ENCODE measurements at regions of chr6 and their contacts with region 1.

Region 1: GRCh38 chr6:106629103-106629858 is at the starts of genes QRSL1 and RTN4IP1:
- DNase-seq: peak; percentile 96
- ATAC-seq: peak; percentile 83
- H3K4me3 ChIP-seq: peak within 1 kb of the TSS; percentile 67 to 98 (median 94)
- H3K4me3 Mint-ChIP-seq: peak within 1 kb of the TSS; percentile 98
- H3K27ac ChIP-seq: peak within 1 kb of the TSS; percentile 87 to 97
- H3K27ac Mint-ChIP-seq: peak within 1 kb of the TSS; percentile 98
- H3K4me1 ChIP-seq: peaks cover 43 to 50% of the 10 kb centered on the region in 2 donors
- H3K4me1 Mint-ChIP-seq: peaks cover 64% of the 10 kb centered on the region
- H3K27me3 ChIP-seq: no peaks in the 10 kb centered on the region
- H3K27me3 Mint-ChIP-seq: no peaks in the 10 kb centered on the region
- CTCF ChIP-seq: no peak
- total RNA-seq, gene QRSL1: 38.5 and 42.1 TPM in 2 replicates
- total RNA-seq, gene RTN4IP1: 12.1 and 13.3 TPM in 2 replicates

Region 2: DNA sequence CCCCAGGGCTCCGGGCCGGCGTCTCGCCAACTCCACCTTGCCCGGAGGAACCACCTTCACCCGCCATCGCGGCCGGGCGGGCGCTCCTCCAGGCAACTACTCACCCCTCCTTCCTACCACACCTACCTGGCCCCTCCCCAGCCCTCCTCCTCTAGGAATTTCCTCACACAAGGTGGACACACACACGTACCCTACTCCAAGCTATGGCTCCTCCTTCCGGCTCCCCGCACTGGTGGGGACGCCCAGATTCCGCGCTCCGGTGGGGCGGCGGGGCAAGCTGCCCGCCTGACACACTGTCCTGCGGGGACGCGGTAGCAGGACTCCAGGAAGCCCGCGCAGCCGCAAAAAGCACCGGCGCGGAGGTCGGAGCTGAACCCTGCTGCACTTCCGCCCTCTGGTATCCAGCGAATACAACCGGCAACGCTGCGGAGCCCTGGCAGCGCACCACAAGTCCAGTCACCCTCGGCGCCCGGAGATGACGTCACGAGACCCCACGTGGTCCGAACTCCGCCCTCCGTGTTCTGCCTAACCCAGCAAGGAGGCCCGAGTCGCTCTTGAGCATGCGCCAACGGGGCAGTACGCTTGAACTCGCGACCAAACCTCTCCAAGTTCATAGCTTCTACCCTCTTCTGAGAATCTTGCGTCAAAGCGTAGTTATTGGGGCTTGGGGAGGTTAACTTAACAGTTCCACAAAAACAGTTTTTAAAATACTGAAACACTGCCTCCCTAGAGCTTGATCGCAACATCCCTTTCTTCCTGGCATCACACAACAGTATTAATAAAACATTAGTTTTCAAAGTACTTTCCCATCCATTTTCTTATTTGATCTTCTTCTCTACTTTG is 303.7 kb before region 1 on chr6 and contains the start of gene ATG5:
- CTCF ChIA-PET with region 1: no interaction called
- POLR2A ChIA-PET with region 1: no interaction called
- intact Hi-C with region 1: loop called (anchors 1 kb)
- DNase-seq: peak; percentile 99
- ATAC-seq: peak; percentile 92
- H3K4me3 ChIP-seq: peak within 1 kb of the TSS; percentile 87 to 99 (median 94)
- H3K4me3 Mint-ChIP-seq: peak within 1 kb of the TSS; percentile 100
- H3K27ac ChIP-seq: peak within 1 kb of the TSS; percentile 89 to 91
- H3K27ac Mint-ChIP-seq: peak within 1 kb of the TSS; percentile 98
- H3K4me1 ChIP-seq: peaks cover 16 to 20% of the 10 kb centered on the region in 2 donors
- H3K4me1 Mint-ChIP-seq: peaks cover 44% of the 10 kb centered on the region
- H3K27me3 ChIP-seq: peaks cover 0 to 6% (median 4%) of the 10 kb centered on the region in 4 experiments
- H3K27me3 Mint-ChIP-seq: peaks cover 27% of the 10 kb centered on the region
- CTCF ChIP-seq: no peak
- total RNA-seq, gene ATG5: 26.3 and 34.0 TPM in 2 replicates

Region 3: DNA sequence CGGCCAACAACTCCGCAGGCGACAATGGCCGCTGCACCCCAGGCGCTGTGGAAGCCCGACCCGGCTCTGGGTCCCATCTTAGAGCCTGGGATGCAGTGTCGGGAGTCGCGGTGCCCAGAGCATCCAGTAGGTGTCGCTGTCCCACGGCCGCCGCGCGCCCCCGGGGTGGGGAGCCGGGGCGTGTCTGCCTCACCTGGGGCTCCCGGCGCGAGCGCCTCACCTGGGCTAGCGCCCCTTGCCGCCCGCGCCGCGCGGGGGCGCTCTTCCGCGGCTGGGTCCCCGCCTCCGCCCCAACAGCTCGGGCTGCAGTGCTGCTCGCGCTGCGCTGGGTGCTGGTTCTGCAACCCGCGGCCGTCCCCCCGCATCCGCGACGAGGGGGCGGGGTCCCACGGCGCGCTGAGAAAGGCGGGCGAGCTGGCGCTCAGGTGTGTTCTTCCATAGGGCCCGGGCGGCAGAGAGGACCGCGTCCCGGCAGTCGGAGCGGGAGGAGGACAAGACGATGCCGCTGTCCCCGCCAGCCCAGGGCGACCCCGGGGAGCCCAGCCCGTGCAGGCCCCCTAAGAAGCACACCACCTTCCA is 268.8 kb before region 1 on chr6 and contains the start of gene CRYBG1:
- CTCF ChIA-PET with region 1: no interaction called
- POLR2A ChIA-PET with region 1: no interaction called
- intact Hi-C with region 1: no loop called
- DNase-seq: peak; percentile 78
- ATAC-seq: peak; percentile 83
- H3K4me3 ChIP-seq: peak within 1 kb of the TSS in 4 of 5 experiments; percentile 41 to 60 (median 50)
- H3K4me3 Mint-ChIP-seq: peak within 1 kb of the TSS; percentile 90
- H3K27ac ChIP-seq: no peak within 1 kb of the TSS
- H3K27ac Mint-ChIP-seq: peak within 1 kb of the TSS; percentile 53
- H3K4me1 ChIP-seq: peaks cover 11 to 16% of the 10 kb centered on the region in 2 donors
- H3K4me1 Mint-ChIP-seq: peaks cover 11% of the 10 kb centered on the region
- H3K27me3 ChIP-seq: peaks cover 0 to 38% (median 28%) of the 10 kb centered on the region in 4 experiments
- H3K27me3 Mint-ChIP-seq: peaks cover 47% of the 10 kb centered on the region
- CTCF ChIP-seq: peak; percentile 90
- total RNA-seq, gene CRYBG1: 47.0 and 47.2 TPM in 2 replicates

Region 4: GRCh38 chr6:106460481-106460880 is 168.8 kb before region 1 on chr6:
- CTCF ChIA-PET with region 1: no interaction called
- POLR2A ChIA-PET with region 1: interaction called, 11 read pairs
- intact Hi-C with region 1: no loop called
- DNase-seq: no peak
- ATAC-seq: no peak
- H3K4me3 ChIP-seq: no peak overlapping the region
- H3K4me3 Mint-ChIP-seq: no peak overlapping the region
- H3K27ac ChIP-seq: no peak overlapping the region
- H3K27ac Mint-ChIP-seq: no peak overlapping the region
- H3K4me1 ChIP-seq: no peaks in the 10 kb centered on the region
- H3K4me1 Mint-ChIP-seq: no peaks in the 10 kb centered on the region
- H3K27me3 ChIP-seq: no peaks in the 10 kb centered on the region
- H3K27me3 Mint-ChIP-seq: no peaks in the 10 kb centered on the region
- CTCF ChIP-seq: no peak

Region 5: DNA sequence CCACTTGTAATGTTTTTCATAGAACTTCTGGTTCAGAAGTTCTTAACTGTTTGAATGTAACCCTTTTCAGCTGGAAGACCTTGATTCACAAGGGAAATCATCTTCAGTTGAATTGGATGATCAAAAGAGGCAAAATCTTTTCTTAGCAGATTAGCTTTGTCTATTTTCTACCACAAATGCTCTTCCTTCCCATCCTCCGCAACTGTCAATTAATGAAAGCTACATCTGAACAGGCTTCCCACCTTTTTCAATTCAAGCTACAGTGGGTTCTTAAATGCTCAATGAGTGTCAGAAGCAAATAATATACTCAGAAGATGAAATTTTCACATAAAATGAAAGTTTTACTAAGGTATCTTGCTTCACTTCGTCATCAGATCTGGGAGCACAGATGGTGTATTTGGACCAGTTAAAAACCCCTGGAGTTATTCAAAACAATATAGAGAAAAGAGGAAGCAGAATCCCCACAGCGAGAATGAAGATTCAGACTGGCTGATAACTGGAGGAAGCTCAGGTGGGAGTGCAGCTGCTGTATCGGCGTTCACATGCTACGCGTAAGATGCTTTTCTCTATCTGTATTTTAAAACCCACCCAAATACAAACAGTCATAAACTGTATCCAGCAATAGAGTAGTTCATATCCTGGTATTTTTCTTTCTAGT is 19.5 kb after region 1 on chr6:
- CTCF ChIA-PET with region 1: interaction called, 3 read pairs
- POLR2A ChIA-PET with region 1: interaction called, 12 read pairs
- intact Hi-C with region 1: loop called (anchors 1 kb)
- DNase-seq: peak; percentile 76
- ATAC-seq: peak; percentile 96
- H3K4me3 ChIP-seq: peak overlapping the region; percentile 38 to 87 (median 58)
- H3K4me3 Mint-ChIP-seq: peak overlapping the region; percentile 87
- H3K27ac ChIP-seq: peak overlapping the region; percentile 82 to 94
- H3K27ac Mint-ChIP-seq: peak overlapping the region; percentile 97
- H3K4me1 ChIP-seq: peaks cover 19 to 24% of the 10 kb centered on the region in 2 donors
- H3K4me1 Mint-ChIP-seq: peaks cover 46% of the 10 kb centered on the region
- H3K27me3 ChIP-seq: no peaks in the 10 kb centered on the region
- H3K27me3 Mint-ChIP-seq: no peaks in the 10 kb centered on the region
- CTCF ChIP-seq: no peak

Region 6: DNA sequence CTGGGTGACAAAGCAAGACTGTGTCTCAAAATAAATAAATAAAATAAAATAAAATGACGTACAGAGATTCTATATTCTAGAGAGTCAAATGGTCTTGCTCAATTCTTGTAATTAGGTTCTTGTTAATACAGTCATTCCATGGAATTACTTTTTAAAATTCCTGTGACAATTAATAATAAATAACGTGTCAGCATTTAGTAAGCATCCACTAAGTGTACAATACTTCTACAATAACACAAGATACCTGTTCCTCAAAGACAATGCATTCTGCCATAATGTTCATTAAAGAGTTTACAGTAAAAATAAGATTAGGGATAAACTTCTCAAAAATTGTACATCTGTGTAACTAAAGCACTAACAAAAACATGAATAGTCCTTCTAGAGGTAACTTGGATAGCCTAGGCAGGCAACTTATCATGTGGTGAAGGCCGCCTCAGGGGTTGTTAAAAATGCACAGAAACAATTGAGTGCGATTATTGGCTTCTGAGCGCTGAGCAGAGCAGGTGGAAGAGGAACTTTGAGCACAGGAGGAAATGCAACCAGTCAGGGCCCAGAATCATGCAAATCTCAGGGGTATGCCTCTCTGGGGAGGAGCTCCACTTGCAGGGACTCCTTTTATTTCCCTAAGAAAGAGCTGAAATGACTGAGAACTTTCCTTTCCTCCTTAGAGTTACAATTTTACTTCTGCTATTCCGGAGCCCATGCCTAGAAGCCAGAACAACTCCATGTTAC is 37.2 kb after region 1 on chr6:
- CTCF ChIA-PET with region 1: interaction called, 3 read pairs
- POLR2A ChIA-PET with region 1: interaction called, 3 read pairs
- intact Hi-C with region 1: loop called (anchors 1 kb)
- DNase-seq: peak; percentile 86
- ATAC-seq: peak; percentile 99
- H3K4me3 ChIP-seq: peak overlapping the region in 2 of 5 experiments; percentile 2 to 29
- H3K4me3 Mint-ChIP-seq: peak overlapping the region; percentile 80
- H3K27ac ChIP-seq: peak overlapping the region; percentile 30 to 81
- H3K27ac Mint-ChIP-seq: peak overlapping the region; percentile 93
- H3K4me1 ChIP-seq: peaks cover 49 to 61% of the 10 kb centered on the region in 2 donors
- H3K4me1 Mint-ChIP-seq: peaks cover 64% of the 10 kb centered on the region
- H3K27me3 ChIP-seq: no peaks in the 10 kb centered on the region
- H3K27me3 Mint-ChIP-seq: no peaks in the 10 kb centered on the region
- CTCF ChIP-seq: no peak

Region 7: GRCh38 chr6:106702451-106703110 is 73.3 kb after region 1 on chr6:
- CTCF ChIA-PET with region 1: no interaction called
- POLR2A ChIA-PET with region 1: interaction called, 3 read pairs
- intact Hi-C with region 1: loop called (anchors 1 kb)
- DNase-seq: peak; percentile 82
- ATAC-seq: peak; percentile 88
- H3K4me3 ChIP-seq: peak overlapping the region; percentile 18 to 45 (median 33)
- H3K4me3 Mint-ChIP-seq: peak overlapping the region; percentile 79
- H3K27ac ChIP-seq: peak overlapping the region; percentile 90 to 94
- H3K27ac Mint-ChIP-seq: peak overlapping the region; percentile 98
- H3K4me1 ChIP-seq: peaks cover 72 to 75% of the 10 kb centered on the region in 2 donors
- H3K4me1 Mint-ChIP-seq: peaks cover 89% of the 10 kb centered on the region
- H3K27me3 ChIP-seq: no peaks in the 10 kb centered on the region
- H3K27me3 Mint-ChIP-seq: no peaks in the 10 kb centered on the region
- CTCF ChIP-seq: no peak

Region 8: DNA sequence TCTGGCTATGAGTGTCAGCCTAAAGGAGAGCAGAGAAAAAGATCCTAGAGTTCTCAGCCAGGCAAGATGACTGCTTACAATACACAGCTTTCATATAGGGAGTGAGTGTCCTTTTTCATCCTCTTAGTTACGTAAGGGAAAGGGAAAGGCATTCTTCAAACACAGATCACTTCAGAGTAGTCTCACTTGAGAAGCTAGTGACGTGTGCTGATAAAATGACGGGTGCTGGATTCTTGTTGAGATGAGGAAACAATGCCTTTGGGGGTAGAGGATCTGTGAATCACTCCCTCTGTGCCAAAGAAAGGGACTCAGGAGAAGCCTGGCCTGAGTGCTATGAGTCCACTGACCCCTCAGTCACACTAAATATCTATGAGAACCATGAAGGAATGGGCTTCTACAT is 117.4 kb after region 1 on chr6:
- CTCF ChIA-PET with region 1: no interaction called
- POLR2A ChIA-PET with region 1: no interaction called
- intact Hi-C with region 1: no loop called
- DNase-seq: no peak
- ATAC-seq: no peak
- H3K4me3 ChIP-seq: no peak overlapping the region
- H3K4me3 Mint-ChIP-seq: no peak overlapping the region
- H3K27ac ChIP-seq: no peak overlapping the region
- H3K27ac Mint-ChIP-seq: no peak overlapping the region
- H3K4me1 ChIP-seq: peaks cover 6 to 8% of the 10 kb centered on the region in 2 donors
- H3K4me1 Mint-ChIP-seq: peaks cover 24% of the 10 kb centered on the region
- H3K27me3 ChIP-seq: no peaks in the 10 kb centered on the region
- H3K27me3 Mint-ChIP-seq: no peaks in the 10 kb centered on the region
- CTCF ChIP-seq: no peak

Region 9: GRCh38 chr6:107033126-107033525 is 403.8 kb after region 1 on chr6:
- CTCF ChIA-PET with region 1: interaction called, 3 read pairs
- POLR2A ChIA-PET with region 1: no interaction called
- intact Hi-C with region 1: loop called (anchors 1 kb)
- DNase-seq: no peak
- ATAC-seq: no peak
- H3K4me3 ChIP-seq: no peak overlapping the region
- H3K4me3 Mint-ChIP-seq: no peak overlapping the region
- H3K27ac ChIP-seq: no peak overlapping the region
- H3K27ac Mint-ChIP-seq: no peak overlapping the region
- H3K4me1 ChIP-seq: peaks cover 4 to 10% of the 10 kb centered on the region in 2 donors
- H3K4me1 Mint-ChIP-seq: peaks cover 20% of the 10 kb centered on the region
- H3K27me3 ChIP-seq: no peaks in the 10 kb centered on the region
- H3K27me3 Mint-ChIP-seq: no peaks in the 10 kb centered on the region
- CTCF ChIP-seq: no peak

Measured in B cell (primary cell).